ENCODE measurements at regions of chr14 and their contacts with region 1.

Region 1: GRCh38 chr14:104752735-104753531 is at the start of gene SIVA1:
- DNase-seq: peak; percentile 97

Region 2: DNA sequence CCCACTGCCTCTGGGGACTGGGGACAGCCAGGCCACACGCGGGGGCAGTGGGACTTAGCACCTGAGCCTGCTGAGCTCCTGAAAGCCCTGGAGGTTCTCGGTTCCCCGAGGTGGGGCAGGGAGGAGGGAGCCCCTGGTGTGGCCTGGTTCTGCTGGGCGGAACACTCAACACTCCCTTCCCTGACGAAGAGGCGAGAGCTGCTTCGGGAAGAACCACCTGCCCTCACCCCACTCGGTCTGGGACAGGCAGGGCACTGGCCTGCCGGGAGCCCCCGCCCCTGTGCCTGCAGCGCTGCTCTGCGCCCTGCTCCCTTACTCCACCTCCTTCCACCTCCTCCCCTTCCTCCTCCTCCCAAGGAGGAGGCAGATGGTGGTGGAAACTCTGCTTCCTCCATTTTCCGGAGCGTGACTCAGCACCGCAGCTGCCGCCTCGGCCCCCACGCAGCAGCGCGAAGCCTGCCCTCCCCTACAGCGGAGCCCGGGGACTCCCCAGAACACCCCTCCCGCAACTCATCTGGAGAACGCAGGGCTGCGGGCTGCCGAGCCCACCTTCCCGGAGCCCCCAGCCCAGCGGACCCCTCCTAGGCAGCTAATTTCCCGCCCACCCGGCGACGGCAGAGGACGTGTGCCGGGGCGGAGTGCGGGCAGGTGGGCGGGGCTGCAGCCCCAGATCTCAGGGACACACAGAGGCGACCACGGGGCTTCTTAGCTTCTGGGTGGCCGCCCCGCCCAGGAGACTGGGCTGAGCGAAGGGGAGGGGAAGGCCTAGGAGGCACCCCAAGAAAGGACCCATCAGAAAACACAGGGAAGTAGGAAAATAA is 75.2 kb before region 1 on chr14:
- in situ Hi-C with region 1: no loop called
- DNase-seq: peak; percentile 78

Region 3: GRCh38 chr14:104826189-104826860 is 73.4 kb after region 1 on chr14:
- in situ Hi-C with region 1: loop called (anchors 10 kb)
- DNase-seq: peak; percentile 83